Aorta (tissue), 5 donors: ENCODE measurements at regions of chr12 and their contacts with region 1.

Region 1: GRCh38 chr12:46268590-46269558 is at the start of gene SLC38A1:
- DNase-seq: peak; percentile 89 to 94
- ATAC-seq: peak; percentile 89
- H3K4me3 ChIP-seq: peak within 1 kb of the TSS; percentile 16 to 58
- H3K27ac ChIP-seq: peak within 1 kb of the TSS in 1 of 2 donors; percentile 2
- H3K4me1 ChIP-seq: no peaks in the 10 kb centered on the region
- H3K27me3 ChIP-seq: no peaks in the 10 kb centered on the region
- total RNA-seq, gene SLC38A1: 30.8 to 66.2 TPM

Region 2: GRCh38 chr12:45872446-45872845 is 396.4 kb before region 1 on chr12:
- intact Hi-C with region 1: no loop called
- DNase-seq: no peak
- ATAC-seq: no peak
- H3K4me3 ChIP-seq: no peak overlapping the region
- H3K27ac ChIP-seq: no peak overlapping the region
- H3K4me1 ChIP-seq: peaks cover 0 to 3% of the 10 kb centered on the region in 2 donors
- H3K27me3 ChIP-seq: no peaks in the 10 kb centered on the region

Region 3: DNA sequence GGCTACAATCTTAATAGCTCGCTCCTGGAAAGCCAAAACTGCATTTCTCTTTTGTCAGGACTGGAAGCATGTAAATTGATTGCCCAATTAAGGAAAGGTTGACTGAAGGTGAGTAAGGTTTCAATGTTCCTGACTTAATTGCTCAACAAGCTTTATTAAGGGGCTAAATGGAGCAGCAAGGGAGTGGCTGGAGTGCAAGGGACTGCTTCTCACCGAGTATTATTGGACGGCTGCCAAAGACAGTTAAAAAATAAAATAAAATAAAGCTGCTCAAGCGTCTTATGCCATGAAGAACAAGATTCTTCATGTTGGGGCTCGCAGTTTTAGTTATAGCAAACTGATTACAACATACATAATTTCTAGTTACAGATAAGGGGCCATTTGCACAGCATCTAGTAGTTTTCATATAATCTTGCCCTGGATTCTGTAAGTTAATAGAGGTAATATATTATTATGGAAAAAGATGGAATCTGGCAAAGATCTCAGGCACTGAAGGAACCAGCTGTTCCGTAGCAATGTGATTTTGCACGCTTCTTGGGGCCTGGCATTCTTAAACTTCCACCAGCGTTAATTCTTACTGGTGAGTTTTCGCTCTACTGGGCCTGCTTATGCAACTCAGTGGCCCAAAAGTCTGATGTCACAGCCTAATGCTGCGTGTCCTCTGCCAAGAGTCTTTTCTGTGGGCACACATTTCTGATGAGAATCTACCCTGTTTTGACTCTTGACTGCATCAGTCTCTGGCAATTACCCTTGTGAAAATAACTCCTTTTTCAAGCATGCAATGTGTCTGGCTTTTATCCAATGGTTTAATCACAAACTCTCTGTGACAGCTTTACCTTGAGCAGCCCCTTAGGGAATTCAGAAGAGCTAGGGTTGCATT is 108.5 kb before region 1 on chr12:
- intact Hi-C with region 1: loop called in 1 of 2 experiments (anchors 5 kb)
- DNase-seq: peak in 1 of 2 donors; percentile 56
- ATAC-seq: peak; percentile 79
- H3K4me3 ChIP-seq: no peak overlapping the region
- H3K27ac ChIP-seq: peak overlapping the region in 1 of 2 donors; percentile 25
- H3K4me1 ChIP-seq: peaks cover 3 to 5% of the 10 kb centered on the region in 2 donors
- H3K27me3 ChIP-seq: no peaks in the 10 kb centered on the region

Region 4: DNA sequence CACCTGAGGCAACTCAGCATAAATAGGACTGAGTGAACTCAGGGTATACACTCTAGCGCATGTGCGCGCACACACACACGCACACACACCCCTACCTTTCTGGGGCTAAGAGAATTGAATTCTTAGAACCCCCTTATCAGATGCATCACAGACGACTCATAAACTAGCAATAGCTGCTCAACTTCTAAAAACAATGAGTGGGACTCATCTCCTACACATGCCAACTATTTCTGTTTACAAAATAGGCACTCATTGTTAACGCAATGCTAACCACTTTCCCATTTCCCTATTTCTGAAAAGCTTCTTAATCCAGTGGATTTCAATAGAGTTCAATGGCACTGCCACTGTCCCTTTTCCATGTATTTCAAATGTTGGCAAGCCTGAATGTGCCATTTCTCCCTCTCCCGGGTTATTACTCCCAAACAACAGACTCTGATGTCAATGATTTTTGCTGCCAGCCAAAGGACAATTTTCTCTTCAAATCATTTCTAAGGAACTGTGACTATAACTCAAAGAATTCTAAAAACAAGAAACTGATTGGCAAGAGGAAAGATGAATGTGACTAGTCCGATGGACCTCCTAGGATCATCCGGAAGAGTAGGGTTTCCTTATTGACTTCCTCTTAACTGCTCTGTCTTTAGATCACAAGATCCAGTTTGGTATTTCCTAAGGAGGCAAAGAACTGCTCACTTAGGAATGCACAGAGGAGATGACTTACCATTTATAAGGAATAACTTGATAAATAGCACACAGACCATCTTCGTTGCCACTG is 48.8 kb before region 1 on chr12:
- intact Hi-C with region 1: loop called (anchors 5 kb)
- DNase-seq: no peak
- ATAC-seq: no peak
- H3K4me3 ChIP-seq: no peak overlapping the region
- H3K27ac ChIP-seq: no peak overlapping the region
- H3K4me1 ChIP-seq: peaks cover 0 to 3% of the 10 kb centered on the region in 2 donors
- H3K27me3 ChIP-seq: no peaks in the 10 kb centered on the region